Activated naive CD4-positive, alpha-beta T cell treated with anti-CD3 and anti-CD28 coated beads for 36 hours (primary cell): ENCODE measurements at regions of chr9 and their contacts with region 1.

Region 1: DNA sequence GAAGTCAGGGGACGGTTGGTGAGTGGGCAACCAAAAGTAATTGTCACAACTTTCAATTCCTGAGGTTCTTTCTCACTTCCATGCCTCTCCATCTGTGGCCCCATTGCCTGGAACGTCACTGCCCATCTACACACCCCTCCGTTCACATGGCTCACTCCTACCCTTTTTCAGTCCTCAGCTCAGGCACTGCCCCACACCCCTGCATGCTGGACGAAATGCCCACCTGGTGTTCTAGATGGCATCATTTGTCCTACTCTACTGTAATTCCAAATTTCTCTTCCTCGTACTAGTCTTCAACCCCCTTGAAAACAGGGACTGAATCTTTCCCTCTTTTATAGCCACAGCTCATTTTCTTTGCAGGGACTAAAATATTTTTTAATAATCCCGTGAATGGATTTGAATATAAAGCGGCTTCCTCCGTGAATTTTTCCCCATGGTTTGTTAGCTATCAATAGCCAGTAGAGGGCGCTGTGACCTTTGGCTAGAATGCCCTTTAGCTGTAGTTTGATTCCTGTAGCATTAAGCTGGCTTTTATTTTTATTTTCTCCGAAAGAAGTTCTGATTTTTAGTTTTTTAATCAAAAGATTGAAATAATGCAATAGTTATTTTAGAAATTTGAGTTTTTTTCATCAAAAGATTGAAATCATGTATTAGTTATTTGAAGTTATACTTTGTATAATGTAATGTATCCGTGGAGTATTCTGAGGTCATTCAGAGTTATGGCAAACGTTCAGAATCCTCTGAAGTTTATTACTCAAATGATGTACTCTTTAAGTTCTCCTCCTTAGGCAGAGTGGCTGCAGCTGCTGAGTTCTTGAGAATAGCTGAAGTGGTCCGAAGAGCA is 232.1 kb downstream of the SH3GL2 start:
- DNase-seq: peak; percentile 63
- H3K4me3 Mint-ChIP-seq: no peak overlapping the region
- H3K27ac Mint-ChIP-seq: no peak overlapping the region
- H3K4me1 Mint-ChIP-seq: no peaks in the 10 kb centered on the region
- H3K27me3 Mint-ChIP-seq: peaks cover 5% of the 10 kb centered on the region

Region 2: GRCh38 chr9:17878810-17879370 is 67.9 kb after region 1 on chr9:
- CTCF ChIA-PET with region 1: no interaction called
- intact Hi-C with region 1: no loop called
- DNase-seq: no peak
- H3K4me3 Mint-ChIP-seq: no peak overlapping the region
- H3K27ac Mint-ChIP-seq: no peak overlapping the region
- H3K4me1 Mint-ChIP-seq: no peaks in the 10 kb centered on the region
- H3K27me3 Mint-ChIP-seq: peaks cover 2% of the 10 kb centered on the region

Region 3: DNA sequence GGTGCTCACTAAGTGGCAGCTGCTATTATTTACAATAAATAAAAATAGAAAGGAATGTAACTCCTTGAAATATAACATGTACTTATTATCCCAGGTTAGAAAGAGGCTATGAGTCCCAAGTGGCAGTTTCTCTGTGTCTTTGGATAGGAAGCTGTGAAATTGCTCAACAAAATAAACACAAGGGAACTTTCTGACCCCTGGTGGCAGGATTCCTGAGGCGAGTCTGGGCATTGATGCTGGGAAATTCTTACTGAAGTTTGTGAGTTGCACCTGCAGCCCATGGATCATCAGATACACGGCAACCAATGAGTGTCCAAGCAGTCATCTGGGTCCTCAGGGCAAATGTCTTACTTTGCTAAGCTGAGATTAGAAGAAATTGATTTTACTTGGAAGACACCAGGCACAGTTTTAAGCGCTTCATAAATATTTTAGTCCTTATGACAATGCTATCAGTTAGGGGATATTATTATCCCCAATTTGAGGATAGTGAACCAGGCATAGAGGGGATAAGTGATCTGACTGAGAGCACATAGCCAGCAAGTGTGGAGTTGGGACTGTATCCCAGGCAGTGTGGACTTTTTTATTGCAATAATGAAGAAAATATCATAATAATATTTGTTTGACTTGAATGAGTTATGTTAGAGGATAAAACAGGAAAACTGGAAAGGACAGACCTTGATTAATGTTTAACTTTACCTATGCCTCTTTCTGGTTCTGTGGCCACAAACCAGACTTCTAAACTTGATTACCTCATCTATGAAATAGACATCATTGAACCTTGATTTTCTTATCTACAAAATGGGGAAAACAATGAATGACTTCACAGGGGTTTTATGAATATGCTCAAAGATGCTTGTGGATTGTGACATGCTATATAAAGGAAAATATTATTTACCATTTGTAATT is 397.5 kb after region 1 on chr9:
- CTCF ChIA-PET with region 1: interaction called, 9 read pairs
- intact Hi-C with region 1: loop called (anchors 1 kb)
- DNase-seq: no peak
- H3K4me3 Mint-ChIP-seq: no peak overlapping the region
- H3K27ac Mint-ChIP-seq: no peak overlapping the region
- H3K4me1 Mint-ChIP-seq: no peaks in the 10 kb centered on the region
- H3K27me3 Mint-ChIP-seq: peaks cover 6% of the 10 kb centered on the region

Region 4: DNA sequence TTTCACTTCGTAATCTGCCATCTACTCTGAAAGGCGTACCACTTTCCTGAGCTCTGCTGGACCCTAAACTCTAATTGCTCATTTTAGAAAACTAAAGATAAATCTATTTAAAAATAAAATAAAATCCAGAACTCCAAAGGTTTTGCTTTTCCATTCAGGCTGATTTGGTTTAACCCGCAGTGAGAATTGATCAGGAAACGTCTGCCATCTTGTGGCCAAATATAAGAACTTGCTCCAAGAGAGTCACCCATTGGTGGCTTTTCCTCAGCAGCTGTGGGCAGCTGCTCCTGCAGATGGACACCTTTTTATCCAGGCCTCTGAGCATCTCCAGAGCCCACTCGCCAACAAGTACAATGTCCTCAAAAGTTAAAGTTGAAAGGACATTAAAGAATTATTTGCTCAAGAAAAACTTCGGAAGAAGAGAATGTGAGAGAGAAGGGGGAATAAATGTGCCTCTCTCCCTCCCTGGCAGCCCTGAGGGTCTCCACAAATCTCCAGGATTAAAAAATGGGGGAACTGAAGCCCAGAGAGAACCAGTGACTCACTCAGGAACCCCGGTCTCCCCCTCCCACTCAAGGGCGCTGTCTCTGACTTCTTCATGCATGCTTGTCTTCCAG is 1218.0 kb after region 1 on chr9:
- CTCF ChIA-PET with region 1: no interaction called
- intact Hi-C with region 1: loop called (anchors 2 kb)
- DNase-seq: peak; percentile 54
- H3K4me3 Mint-ChIP-seq: no peak overlapping the region
- H3K27ac Mint-ChIP-seq: no peak overlapping the region
- H3K4me1 Mint-ChIP-seq: peaks cover 7% of the 10 kb centered on the region
- H3K27me3 Mint-ChIP-seq: peaks cover 10% of the 10 kb centered on the region